Activated CD8-positive, alpha-beta T cell treated with anti-CD3 and anti-CD28 coated beads for 36 hours (primary cell): ENCODE measurements at regions of chr1 and their contacts with region 1.

Region 1: GRCh38 chr1:66271216-66271903 is 262.6 kb upstream of the SGIP1 start:
- DNase-seq: peak; percentile 80
- ATAC-seq: peak; percentile 63
- H3K4me3 Mint-ChIP-seq: no peak overlapping the region
- H3K27ac Mint-ChIP-seq: peak overlapping the region; percentile 86
- H3K4me1 Mint-ChIP-seq: peaks cover 65% of the 10 kb centered on the region
- H3K27me3 Mint-ChIP-seq: no peaks in the 10 kb centered on the region
- CTCF ChIP-seq: no peak

Region 2: GRCh38 chr1:66253330-66253921 is 17.9 kb before region 1 on chr1:
- CTCF ChIA-PET with region 1: interaction called, 44 read pairs
- POLR2A ChIA-PET with region 1: interaction called, 3 read pairs
- intact Hi-C with region 1: no loop called
- DNase-seq: no peak
- ATAC-seq: peak; percentile 89
- H3K4me3 Mint-ChIP-seq: no peak overlapping the region
- H3K27ac Mint-ChIP-seq: no peak overlapping the region
- H3K4me1 Mint-ChIP-seq: peaks cover 46% of the 10 kb centered on the region
- H3K27me3 Mint-ChIP-seq: peaks cover 1% of the 10 kb centered on the region
- CTCF ChIP-seq: peak; percentile 83

Region 3: DNA sequence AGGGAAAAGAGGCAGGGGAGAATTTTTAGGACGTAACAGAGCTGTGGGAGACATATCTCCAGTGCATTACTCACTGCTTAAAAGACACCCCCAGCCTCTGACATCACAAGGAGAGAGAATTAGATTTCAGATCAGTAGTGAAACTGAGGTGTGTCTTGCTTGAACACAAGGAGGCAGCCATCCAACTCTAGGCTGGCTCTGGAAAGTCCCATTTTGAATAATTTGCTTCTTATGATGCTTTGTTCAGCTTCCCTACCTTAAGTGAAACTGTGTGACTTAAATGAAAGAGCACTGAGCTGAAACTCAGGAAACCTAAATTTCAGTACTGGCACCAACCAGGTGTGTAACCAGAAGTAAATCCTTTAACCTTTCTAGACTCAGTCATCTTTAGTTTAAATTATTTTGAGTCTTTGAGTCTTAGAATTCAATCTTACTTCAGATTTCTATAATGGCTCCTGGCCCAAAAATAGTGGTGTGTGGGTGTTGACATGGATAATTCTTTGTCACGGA is 11.0 kb after region 1 on chr1:
- CTCF ChIA-PET with region 1: interaction called, 4 read pairs
- POLR2A ChIA-PET with region 1: interaction called, 4 read pairs
- intact Hi-C with region 1: loop called (anchors 1 kb)
- DNase-seq: peak; percentile 89
- ATAC-seq: peak; percentile 82
- H3K4me3 Mint-ChIP-seq: peak overlapping the region; percentile 14
- H3K27ac Mint-ChIP-seq: peak overlapping the region; percentile 93
- H3K4me1 Mint-ChIP-seq: peaks cover 90% of the 10 kb centered on the region
- H3K27me3 Mint-ChIP-seq: no peaks in the 10 kb centered on the region
- CTCF ChIP-seq: no peak

Region 4: DNA sequence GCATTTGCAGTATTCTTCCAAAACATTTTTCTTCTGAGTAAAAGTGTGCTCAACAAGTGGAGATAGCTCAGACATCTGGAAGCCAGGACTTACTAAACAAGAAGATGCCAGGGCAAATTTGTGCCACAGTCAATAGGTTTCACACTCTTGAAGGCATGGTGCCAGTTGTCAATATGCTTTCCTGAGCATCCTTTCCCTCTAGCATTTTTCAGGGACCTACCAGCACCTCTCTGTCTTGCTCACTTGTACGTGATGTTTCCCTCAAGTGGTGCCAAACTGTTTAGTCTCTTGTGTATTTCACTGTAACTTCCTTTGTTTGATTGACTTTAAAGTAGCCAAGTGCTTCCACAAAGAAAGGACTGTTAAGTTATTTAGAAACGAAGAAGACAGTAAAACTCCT is 68.6 kb after region 1 on chr1:
- CTCF ChIA-PET with region 1: interaction called, 16 read pairs
- POLR2A ChIA-PET with region 1: interaction called, 23 read pairs
- intact Hi-C with region 1: no loop called
- DNase-seq: no peak
- ATAC-seq: no peak
- H3K4me3 Mint-ChIP-seq: peak overlapping the region; percentile 68
- H3K27ac Mint-ChIP-seq: peak overlapping the region; percentile 89
- H3K4me1 Mint-ChIP-seq: peaks cover 70% of the 10 kb centered on the region
- H3K27me3 Mint-ChIP-seq: no peaks in the 10 kb centered on the region
- CTCF ChIP-seq: no peak

Region 5: DNA sequence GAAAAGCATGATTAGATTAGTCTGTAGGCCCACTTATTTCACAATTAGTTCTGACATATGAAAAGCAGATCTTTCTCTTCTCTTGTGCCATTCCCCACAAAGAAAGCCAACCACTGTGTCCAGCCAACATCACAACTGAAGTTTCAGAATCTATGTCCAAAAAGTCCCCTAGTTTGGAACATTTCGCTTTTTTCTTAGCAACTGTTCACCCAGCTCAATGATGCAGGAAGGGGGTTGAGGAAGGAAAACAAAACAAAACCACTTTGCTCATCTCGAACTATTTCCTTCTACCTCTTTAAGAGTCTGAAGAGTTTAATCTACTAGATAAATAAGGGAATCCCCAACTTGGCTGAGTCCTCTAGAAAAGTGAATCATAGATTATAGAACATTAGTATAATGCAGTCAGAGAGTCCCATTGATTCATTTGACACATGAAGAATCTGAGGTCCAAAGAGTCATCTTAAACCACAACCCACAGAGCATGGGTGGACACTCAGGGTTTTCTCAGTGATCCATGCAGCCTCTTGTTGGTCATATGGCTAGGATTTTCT is 103.3 kb after region 1 on chr1:
- CTCF ChIA-PET with region 1: interaction called, 6 read pairs
- POLR2A ChIA-PET with region 1: no interaction called
- intact Hi-C with region 1: loop called (anchors 2 kb)
- DNase-seq: peak; percentile 76
- ATAC-seq: peak; percentile 75
- H3K4me3 Mint-ChIP-seq: peak overlapping the region; percentile 60
- H3K27ac Mint-ChIP-seq: peak overlapping the region; percentile 93
- H3K4me1 Mint-ChIP-seq: peaks cover 75% of the 10 kb centered on the region
- H3K27me3 Mint-ChIP-seq: no peaks in the 10 kb centered on the region
- CTCF ChIP-seq: no peak